ENCODE measurements at regions of chr9 and their contacts with region 1.

Region 1: DNA sequence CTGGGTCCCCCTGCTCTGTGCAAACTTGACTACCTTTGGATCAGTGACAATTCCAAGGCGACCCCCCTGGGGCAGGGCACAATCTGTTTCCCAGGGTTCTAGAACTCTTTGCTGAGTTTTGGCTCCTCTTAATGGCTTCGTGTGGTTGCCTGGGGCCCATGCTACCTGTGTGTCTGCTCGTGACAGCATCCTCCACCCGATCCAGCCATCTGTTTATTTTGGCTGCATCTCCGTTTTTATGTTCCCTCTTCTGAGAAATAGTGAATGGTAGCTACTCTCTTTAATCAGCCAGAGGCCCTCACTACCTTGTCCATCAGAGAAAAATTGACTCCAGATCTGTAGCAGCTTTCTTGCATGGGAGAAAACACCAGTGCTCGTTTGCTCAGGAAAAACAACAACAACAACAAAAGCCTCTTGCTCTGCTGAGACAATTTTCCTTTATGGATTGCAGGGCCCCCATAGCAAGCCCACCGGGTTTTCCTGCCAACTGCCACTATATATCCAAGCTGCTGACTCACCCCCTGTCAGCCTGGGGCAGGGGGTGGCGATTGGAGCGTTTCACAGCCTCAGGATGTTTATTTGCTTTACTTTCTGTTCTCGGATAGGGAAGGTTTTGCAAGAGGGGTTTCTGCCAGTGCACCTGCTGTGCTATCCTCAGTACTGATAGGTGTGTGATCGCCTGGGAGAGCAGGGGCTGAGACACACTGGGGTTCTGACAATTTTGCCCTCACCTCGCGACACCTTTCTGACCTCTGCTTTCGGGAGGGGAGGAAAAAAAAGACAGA is 607.8 kb downstream of the BNC2 start:
- DNase-seq: no peak
- ATAC-seq: no peak
- H3K4me3 ChIP-seq: no peak overlapping the region
- H3K27ac ChIP-seq: no peak overlapping the region
- H3K4me1 ChIP-seq: peaks cover 0 to 1% (median 0%) of the 10 kb centered on the region in 9 donors
- H3K27me3 ChIP-seq: peaks cover 0 to 21% (median 13%) of the 10 kb centered on the region in 7 donors
- CTCF ChIP-seq: no peak

Region 2: GRCh38 chr9:16207161-16207560 is 55.5 kb before region 1 on chr9:
- intact Hi-C with region 1: loop called in 1 of 10 experiments (anchors 5 kb)
- DNase-seq: peak; percentile 34 to 36
- ATAC-seq: peak in 7 of 8 donors; percentile 50 to 73 (median 64)
- H3K4me3 ChIP-seq: no peak overlapping the region
- H3K27ac ChIP-seq: peak overlapping the region in 3 of 10 donors; percentile 19 to 39 (median 29)
- H3K4me1 ChIP-seq: peaks cover 0 to 15% (median 0%) of the 10 kb centered on the region in 9 donors
- H3K27me3 ChIP-seq: no peaks in the 10 kb centered on the region
- CTCF ChIP-seq: no peak

Region 3: DNA sequence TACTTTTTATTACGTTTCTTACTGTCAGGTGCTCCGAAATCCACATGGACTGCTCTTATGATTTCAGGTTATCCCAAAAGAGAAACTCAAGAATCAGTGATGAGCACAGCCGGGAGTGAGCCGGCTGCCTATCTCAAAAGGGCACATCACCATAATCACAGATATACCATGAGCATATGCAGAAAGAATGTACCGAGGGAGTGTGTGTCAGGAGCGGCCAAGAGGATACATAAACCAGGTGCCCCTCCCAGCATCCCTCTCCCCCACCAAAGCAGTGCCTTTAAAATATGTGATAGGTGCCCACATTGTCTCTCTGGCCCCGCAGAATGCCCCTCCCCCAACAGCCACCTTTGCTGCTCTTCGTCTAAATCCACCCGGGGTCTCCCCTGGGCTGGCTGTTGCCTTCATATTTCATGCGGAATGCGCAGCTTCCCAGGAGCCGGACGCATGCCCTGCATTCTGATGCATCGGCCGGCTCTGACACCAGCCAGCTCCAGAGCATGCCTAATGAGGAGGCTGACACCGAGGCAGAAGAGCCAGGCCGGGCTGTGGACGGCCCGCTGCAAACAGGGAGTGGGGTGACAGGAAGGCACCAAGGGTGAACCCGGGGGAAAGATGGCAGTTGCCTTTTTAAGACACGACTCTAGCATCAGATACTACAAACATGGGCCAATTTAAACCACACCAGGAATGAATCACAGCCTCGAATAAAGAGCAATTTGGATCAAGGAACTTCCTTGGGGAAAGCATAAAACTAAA is 44.5 kb before region 1 on chr9:
- intact Hi-C with region 1: no loop called
- DNase-seq: no peak
- ATAC-seq: no peak
- H3K4me3 ChIP-seq: no peak overlapping the region
- H3K27ac ChIP-seq: peak overlapping the region in 1 of 10 donors; percentile 36
- H3K4me1 ChIP-seq: peaks cover 0 to 45% (median 14%) of the 10 kb centered on the region in 9 donors
- H3K27me3 ChIP-seq: peaks cover 0 to 9% (median 0%) of the 10 kb centered on the region in 7 donors
- CTCF ChIP-seq: no peak